Transverse colon (tissue), 4 donors: ENCODE measurements at regions of chr5 and their contacts with region 1.

Region 1: DNA sequence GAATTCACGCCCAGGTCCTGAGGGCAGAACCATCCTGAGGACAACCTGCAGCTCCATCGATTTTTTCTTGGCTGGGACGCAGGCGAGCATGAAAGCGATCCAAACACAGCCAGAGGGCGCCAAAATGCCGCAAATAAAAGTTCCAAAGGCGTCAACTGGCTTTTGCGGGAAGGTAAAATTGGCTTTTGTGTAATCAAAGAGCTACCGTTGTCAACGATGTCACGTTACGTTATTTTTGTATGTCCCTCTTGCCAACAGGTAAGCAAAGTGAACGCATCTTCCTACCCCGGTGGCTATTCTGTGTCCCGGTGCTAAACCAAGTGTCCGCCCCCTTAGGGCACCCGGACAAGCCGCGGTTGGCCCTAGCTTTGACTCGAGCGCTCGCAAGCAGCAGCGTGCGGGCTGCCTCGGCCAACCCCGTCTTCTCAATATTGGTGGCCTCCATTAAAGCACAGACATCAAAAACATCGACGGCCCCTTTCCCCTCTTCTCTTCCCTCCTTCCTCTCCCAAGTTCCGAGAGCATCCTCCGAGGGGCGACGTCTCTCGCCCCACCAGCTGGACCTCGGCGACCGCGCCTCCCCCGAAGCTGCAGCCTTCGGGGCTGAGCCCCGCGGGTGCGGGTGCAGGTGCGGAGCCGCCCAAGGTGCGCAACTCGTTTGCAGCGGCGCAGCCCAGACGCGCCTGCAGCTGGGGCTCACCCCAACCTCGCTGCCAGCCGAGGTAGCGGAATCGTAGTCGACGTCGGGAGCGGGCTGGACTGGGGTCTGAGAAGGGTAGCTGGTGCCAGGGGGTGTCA is 1.1 kb upstream of the BASP1 start:
- DNase-seq: peak; percentile 83
- H3K4me3 ChIP-seq: peak overlapping the region in 2 of 4 donors; percentile 51 to 64
- H3K27ac ChIP-seq: peak overlapping the region in 3 of 4 donors; percentile 13 to 71 (median 59)
- H3K4me1 ChIP-seq: peaks cover 0 to 25% (median 20%) of the 10 kb centered on the region in 4 donors
- H3K27me3 ChIP-seq: peaks cover 39% of the 10 kb centered on the region
- CTCF ChIP-seq: peak; percentile 62 to 83 (median 72)
- EP300 ChIP-seq: no peak
- POLR2A ChIP-seq: no peak

Region 2: DNA sequence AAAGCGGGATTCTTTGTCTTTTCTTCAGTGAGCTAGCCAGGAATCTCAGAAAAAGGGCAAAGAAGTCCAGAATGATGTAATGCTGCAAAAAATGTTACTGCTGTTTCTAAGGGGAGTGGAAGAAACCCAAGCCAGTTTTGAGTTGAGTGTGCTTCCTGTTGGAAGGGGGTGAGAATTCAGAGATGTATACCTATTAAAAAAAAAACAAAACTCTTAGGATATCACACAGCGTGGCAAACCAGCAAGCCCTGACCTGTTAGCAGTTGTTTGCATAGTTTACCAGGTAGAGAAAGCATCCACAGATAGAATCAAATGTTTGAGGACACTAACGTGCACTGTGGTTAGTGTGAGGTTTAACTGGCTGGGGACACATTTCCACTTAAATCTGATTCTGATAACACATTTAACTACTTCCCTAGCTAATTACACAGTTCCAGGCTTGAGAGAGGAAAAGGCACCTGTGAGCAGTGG is 12.5 kb after region 1 on chr5:
- in situ Hi-C with region 1: no loop called
- intact Hi-C with region 1: no loop called
- DNase-seq: no peak
- H3K4me3 ChIP-seq: no peak overlapping the region
- H3K27ac ChIP-seq: no peak overlapping the region
- H3K4me1 ChIP-seq: no peaks in the 10 kb centered on the region
- H3K27me3 ChIP-seq: no peaks in the 10 kb centered on the region
- CTCF ChIP-seq: no peak
- EP300 ChIP-seq: no peak
- POLR2A ChIP-seq: no peak

Region 3: GRCh38 chr5:18299166-18299565 is 1082.8 kb after region 1 on chr5:
- in situ Hi-C with region 1: loop called in 2 of 4 experiments (anchors 10 kb)
- intact Hi-C with region 1: no loop called
- DNase-seq: no peak
- H3K4me3 ChIP-seq: no peak overlapping the region
- H3K27ac ChIP-seq: no peak overlapping the region
- H3K4me1 ChIP-seq: no peaks in the 10 kb centered on the region
- H3K27me3 ChIP-seq: no peaks in the 10 kb centered on the region
- CTCF ChIP-seq: no peak
- EP300 ChIP-seq: no peak
- POLR2A ChIP-seq: no peak

Region 4: GRCh38 chr5:18305297-18305924 is 1089.0 kb after region 1 on chr5:
- in situ Hi-C with region 1: loop called in 3 of 4 experiments (anchors 5 to 10 kb)
- intact Hi-C with region 1: no loop called
- DNase-seq: no peak
- H3K4me3 ChIP-seq: no peak overlapping the region
- H3K27ac ChIP-seq: no peak overlapping the region
- H3K4me1 ChIP-seq: no peaks in the 10 kb centered on the region
- H3K27me3 ChIP-seq: no peaks in the 10 kb centered on the region
- CTCF ChIP-seq: peak; percentile 41 to 59 (median 59)
- EP300 ChIP-seq: no peak
- POLR2A ChIP-seq: no peak

Region 5: GRCh38 chr5:18314192-18314778 is 1097.9 kb after region 1 on chr5:
- in situ Hi-C with region 1: loop called in 3 of 4 experiments (anchors 5 to 10 kb)
- intact Hi-C with region 1: no loop called
- DNase-seq: no peak
- H3K4me3 ChIP-seq: no peak overlapping the region
- H3K27ac ChIP-seq: no peak overlapping the region
- H3K4me1 ChIP-seq: no peaks in the 10 kb centered on the region
- H3K27me3 ChIP-seq: no peaks in the 10 kb centered on the region
- CTCF ChIP-seq: peak; percentile 26 to 64 (median 47)
- EP300 ChIP-seq: no peak
- POLR2A ChIP-seq: no peak